ENCODE measurements at regions of chr9 and their contacts with region 1.

Region 1: GRCh38 chr9:13033959-13034693 is 245.4 kb downstream of the MPDZ start:
- DNase-seq: peak; percentile 69
- ATAC-seq: peak; percentile 93

Region 2: DNA sequence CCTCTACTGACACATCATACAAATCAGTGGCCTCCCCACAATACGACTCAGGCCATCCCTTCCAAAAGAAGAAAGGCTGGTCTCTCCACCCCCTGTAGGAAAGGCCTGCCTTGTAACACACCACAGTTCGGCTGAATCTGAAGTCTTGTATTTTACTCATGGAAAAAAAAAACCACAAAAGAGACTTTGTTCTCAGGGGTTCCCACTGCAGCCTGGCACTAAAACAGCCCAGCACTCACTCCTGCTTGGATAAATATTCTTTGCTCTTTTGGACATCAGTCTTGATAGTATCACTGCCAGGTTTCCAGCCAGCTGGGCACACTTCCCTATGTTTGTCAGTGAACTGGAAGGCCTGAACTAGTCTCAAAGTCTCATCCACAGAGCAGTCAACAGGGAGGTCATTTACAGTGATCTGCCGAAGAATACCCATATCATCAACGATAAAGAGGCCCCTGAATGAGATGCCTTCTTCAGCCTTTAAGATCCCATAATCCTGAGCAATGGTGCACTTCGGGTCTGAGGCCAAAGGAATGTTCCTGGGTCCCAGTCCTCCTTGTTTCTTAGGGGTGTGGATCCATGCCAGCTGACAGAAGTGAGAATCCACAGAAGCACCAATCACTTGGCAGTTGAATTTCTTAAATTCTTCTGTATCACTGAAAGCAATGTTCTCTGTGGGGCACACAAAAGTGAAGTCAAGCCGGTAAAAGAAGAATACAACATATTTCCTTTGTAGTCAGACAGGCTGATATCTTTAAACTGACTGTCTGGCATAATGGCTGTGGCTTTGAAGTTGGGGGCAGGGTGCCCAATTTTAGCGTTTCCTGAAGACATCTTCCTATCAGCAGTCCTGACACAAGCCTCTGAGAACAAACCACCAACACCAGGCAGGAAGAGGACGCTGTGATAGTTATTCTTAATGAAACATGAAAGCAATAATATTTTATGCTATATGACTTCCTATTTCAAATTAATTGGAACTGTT is 61.2 kb before region 1 on chr9:
- intact Hi-C with region 1: loop called (anchors 10 kb)
- DNase-seq: peak; percentile 43
- ATAC-seq: peak; percentile 82

Region 3: DNA sequence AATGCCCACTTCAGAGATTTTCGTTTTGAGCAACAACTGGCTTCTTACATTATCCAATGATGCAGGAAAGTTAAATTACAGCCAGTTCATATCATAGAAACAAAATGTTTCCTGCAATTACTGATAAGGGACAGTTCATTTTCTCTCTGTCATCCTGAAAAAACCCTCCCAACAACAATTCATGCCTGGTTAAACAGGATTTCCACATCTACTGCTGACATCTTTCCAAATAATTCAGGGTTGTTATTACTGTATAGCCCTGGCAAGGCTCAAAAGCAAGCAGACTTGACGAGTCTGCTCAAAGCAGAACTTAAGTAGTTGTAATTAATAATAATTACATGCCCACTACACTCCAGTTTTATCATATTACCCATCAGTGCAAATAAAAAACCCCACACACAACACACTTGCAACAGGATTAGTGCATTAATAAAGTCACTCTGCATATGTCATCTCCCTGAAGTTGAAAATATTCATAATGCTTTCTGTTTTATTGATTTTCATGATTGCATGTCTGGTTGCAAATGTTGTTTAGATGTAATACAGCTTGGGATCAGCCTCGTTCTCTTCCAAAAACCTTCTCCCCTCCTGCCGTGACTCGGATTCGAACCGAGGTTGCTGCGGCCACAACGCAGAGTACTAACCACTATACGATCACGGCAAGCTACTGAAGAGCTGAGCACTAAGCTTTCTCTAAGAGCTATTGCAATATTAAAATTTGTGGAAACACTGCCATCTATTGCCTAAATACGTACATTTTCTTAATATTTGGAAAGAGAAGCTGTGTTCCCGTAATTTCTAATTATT is 1399.4 kb after region 1 on chr9:
- intact Hi-C with region 1: loop called (anchors 10 kb)
- DNase-seq: no peak
- ATAC-seq: peak; percentile 69